Activated CD4-positive, alpha-beta T cell treated with anti-CD3 and anti-CD28 coated beads, Interleukin-2, amount 10 ng/mL, durations not matched to agents 7 days and 5 days (primary cell): ENCODE measurements at regions of chr7 and their contacts with region 1.

Region 1: DNA sequence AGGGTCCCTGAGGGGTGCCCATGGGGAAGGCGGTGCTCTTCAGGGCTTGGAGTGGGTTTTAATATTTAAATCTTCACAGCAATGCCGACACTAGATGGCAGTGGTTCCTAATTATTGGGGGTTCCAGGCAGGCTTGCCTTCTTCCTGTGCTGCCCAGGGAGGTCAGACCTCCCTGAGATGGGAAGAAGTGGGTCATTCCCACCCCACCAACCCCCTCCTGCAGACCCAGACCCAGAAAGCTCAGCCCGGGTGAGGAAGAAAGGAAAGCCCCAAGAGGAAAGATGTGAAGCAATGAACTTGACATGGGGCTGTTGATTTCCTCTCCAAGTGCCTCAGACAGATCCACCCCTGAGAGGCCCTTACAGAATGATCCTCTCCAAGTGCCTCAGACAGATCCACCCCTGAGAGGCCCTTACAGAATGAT is 85.1 kb upstream of the LANCL2 start:
- DNase-seq: peak; percentile 77
- H3K4me3 Mint-ChIP-seq: no peak overlapping the region
- H3K27ac Mint-ChIP-seq: no peak overlapping the region
- H3K4me1 Mint-ChIP-seq: no peaks in the 10 kb centered on the region
- H3K27me3 Mint-ChIP-seq: peaks cover 5% of the 10 kb centered on the region

Region 2: DNA sequence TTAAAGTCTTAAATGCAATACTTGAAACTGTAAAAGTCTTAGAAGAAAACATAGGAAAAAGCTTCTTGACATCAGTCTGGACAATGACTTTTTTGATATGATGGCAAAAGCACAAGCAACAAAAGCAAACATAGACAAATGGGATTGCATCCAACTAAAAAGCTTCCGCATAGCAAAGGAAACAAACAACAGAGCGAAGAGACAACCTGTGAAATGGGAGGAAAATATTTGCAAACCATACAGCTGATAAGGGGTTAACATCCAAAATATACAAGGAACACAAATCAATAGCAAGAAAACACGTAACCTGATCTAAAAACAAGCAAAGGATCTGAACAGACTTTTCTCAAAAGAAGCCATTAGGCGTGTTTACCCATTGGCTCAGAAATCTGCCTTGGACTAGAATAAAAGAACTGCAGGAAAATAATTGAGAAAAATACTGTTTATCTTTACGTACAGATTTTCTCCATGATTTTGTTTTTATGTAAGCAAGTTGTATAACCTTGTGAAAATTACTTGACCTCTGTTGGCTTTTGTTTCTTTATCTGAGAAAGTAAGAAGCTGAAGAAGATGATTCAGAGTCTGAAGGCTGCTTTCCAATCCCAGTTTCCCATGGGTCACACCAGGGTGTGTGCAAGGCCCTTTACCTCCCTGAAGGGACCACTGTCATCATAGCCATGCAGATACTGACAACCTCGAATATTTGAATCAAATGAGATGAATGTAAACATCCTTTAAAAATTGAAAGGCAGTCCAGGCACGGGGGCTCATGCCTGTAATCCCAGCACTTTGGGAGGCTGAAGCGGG is 14.0 kb before region 1 on chr7:
- CTCF ChIA-PET with region 1: no interaction called
- POLR2A ChIA-PET with region 1: no interaction called
- DNase-seq: no peak
- H3K4me3 Mint-ChIP-seq: no peak overlapping the region
- H3K27ac Mint-ChIP-seq: no peak overlapping the region
- H3K4me1 Mint-ChIP-seq: no peaks in the 10 kb centered on the region
- H3K27me3 Mint-ChIP-seq: peaks cover 19% of the 10 kb centered on the region

Region 3: GRCh38 chr7:55415173-55415778 is 135.2 kb after region 1 on chr7:
- CTCF ChIA-PET with region 1: interaction called, 11 read pairs
- POLR2A ChIA-PET with region 1: no interaction called
- DNase-seq: peak; percentile 88
- H3K4me3 Mint-ChIP-seq: no peak overlapping the region
- H3K27ac Mint-ChIP-seq: no peak overlapping the region
- H3K4me1 Mint-ChIP-seq: peaks cover 4% of the 10 kb centered on the region
- H3K27me3 Mint-ChIP-seq: no peaks in the 10 kb centered on the region